ENCODE measurements at regions of chr6 and their contacts with region 1.

Region 1: GRCh38 chr6:1609648-1610496 is at the start of gene FOXC1:
- DNase-seq: peak; percentile 85
- ATAC-seq: peak; percentile 89 to 90
- H3K4me3 ChIP-seq: peak within 1 kb of the TSS; percentile 70
- H3K27ac ChIP-seq: peak within 1 kb of the TSS; percentile 71
- H3K4me1 ChIP-seq: peaks cover 51% of the 10 kb centered on the region
- H3K27me3 ChIP-seq: peaks cover 87% of the 10 kb centered on the region
- CTCF ChIP-seq: no peak
- total RNA-seq, gene FOXC1: 2.3 TPM

Region 2: GRCh38 chr6:1325461-1326309 is 284.2 kb before region 1 on chr6:
- intact Hi-C with region 1: no loop called
- DNase-seq: no peak
- ATAC-seq: peak; percentile 58 to 72
- H3K4me3 ChIP-seq: no peak overlapping the region
- H3K27ac ChIP-seq: peak overlapping the region; percentile 41
- H3K4me1 ChIP-seq: peaks cover 51% of the 10 kb centered on the region
- H3K27me3 ChIP-seq: no peaks in the 10 kb centered on the region
- CTCF ChIP-seq: no peak

Region 3: DNA sequence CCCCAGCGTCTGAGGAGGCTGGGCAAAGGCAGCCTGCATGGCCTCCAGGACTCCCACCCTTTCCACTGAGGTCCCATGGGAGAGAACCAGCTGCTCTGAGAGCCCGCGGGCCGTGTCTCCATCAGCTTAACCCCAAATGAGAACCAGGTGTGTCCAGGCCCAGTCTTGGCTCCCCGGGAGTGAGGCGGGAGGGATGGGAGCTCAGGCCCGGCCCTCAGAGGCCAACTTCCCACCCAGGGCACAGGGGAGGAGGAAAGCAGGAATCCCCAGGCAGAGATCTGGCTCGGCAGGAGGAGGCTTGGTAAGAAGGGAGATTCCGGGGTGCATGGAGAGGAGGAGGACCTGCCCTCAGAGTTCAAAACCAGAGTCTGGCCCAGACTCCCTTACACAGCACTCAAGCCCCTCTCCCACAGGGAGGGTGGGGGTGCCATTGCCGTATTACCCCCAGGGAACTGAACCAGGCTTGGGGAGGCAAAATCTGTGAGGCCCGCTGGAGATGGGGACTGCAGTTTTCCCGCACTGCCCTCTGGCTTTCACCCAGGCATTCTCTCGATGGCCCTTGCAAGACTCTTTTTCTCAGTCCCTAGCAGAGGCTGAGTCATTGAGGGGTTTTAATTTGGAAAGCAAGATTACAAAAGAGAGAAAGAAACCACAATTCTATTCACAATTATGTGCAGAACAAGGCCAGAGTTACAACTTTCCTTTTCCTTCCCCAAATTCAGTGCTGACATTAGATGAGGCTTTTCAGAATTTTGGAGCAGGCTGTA is 203.4 kb before region 1 on chr6:
- intact Hi-C with region 1: no loop called
- DNase-seq: no peak
- ATAC-seq: no peak
- H3K4me3 ChIP-seq: no peak overlapping the region
- H3K27ac ChIP-seq: no peak overlapping the region
- H3K4me1 ChIP-seq: peaks cover 10% of the 10 kb centered on the region
- H3K27me3 ChIP-seq: no peaks in the 10 kb centered on the region
- CTCF ChIP-seq: no peak

Region 4: DNA sequence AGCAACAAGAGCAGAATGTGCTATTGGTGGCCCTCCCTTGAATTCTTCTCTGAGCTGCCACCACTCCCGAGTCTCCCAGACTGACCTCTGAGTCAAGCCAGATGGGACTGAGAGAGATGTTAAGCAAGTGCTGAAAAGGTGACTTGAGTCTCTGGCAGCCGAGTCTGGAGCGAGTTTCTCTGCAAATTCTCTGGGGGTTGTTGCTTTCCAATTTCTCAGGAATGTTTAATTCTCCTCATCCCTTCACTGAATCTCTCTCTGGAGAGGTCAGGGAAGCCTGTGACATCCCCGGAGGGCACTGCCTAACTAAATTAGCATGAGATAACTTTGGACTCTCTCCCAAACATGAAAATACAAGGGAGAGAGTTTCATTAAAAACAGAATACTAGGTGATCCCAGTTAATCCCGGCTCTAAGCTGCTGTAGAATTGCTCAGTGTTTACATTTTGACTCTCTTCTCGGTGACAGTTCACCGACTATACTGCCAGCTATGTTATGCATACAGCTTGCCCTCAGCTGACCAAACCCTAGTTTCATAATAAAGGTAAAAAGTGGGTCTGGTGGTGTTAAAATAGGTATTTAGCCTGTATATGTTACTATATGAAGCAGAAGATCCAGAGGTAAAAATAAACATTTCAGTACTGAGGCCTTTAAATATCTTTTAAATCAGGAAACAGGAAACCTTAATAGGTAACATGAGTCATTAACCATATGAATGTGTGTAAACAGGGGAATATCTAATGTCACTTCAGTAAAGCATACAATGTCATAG is 157.8 kb after region 1 on chr6:
- intact Hi-C with region 1: no loop called
- DNase-seq: no peak
- ATAC-seq: no peak
- H3K4me3 ChIP-seq: no peak overlapping the region
- H3K27ac ChIP-seq: no peak overlapping the region
- H3K4me1 ChIP-seq: peaks cover 11% of the 10 kb centered on the region
- H3K27me3 ChIP-seq: no peaks in the 10 kb centered on the region
- CTCF ChIP-seq: no peak

Region 5: GRCh38 chr6:2196079-2196679 is 586.3 kb after region 1 on chr6:
- intact Hi-C with region 1: loop called (anchors 10 kb)
- DNase-seq: no peak
- ATAC-seq: peak; percentile 87
- H3K4me3 ChIP-seq: no peak overlapping the region
- H3K27ac ChIP-seq: no peak overlapping the region
- H3K4me1 ChIP-seq: peaks cover 11% of the 10 kb centered on the region
- H3K27me3 ChIP-seq: no peaks in the 10 kb centered on the region
- CTCF ChIP-seq: peak; percentile 79

Measured in lower lobe of right lung (tissue), 2 donors.